Activated T-helper 1 cell treated with anti-CD3 and anti-CD28 coated beads, Interleukin-12 subunit alpha, Interleukin-12 subunit beta, Interleukin-2, Interleukin-4 antibody, amounts not matched to agents 30 ng/mL and 10 ng/mL and 1 ng/mL, durations not matched to agents 14 hours and 24 hours and 36 hours (primary cell): ENCODE measurements at regions of chr22 and their contacts with region 1.

Region 1: DNA sequence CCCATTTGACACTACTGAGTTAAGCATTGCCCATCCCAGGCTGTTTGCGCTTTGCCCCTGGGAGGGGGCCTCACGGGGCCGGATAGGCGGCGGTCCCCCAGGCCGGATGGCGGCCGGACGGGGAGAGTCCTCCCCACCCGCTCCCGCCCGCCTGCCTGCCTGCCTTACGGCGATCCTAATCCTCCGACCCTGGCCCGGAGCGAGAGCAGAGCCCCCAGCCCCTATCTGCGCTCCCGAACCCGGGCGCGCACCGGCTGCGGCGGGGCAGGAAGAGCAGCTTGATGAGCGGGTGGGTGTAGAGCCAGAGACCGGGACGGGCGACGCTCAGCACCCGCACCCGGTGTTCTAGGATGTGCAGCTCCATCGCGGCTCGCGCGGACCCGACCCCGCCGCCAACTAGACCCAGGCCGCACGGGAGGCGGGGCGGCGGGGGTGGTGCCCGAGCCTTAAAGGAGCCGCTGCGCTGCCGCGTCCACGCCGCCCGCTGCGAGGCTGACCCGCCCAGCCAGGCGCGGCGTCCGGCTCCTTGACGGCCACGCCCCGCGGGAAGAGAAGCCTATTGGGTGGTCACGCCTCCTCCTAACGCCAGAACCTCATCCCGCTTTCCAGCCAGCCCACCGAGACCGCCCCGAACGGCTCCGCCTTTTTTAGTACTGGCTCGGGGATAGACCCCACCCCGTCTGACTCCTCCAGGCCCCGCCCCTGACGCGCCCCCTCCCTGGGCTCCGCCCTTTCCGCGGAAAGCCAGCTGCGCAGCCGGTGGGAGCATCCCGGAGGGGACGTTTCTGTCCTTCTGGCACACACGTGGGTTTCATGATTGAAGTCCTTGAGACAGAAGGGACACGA is at the start of gene CASTOR1:
- DNase-seq: peak; percentile 90
- H3K4me3 Mint-ChIP-seq: peak within 1 kb of the TSS; percentile 87
- H3K27ac Mint-ChIP-seq: peak within 1 kb of the TSS; percentile 81
- H3K4me1 Mint-ChIP-seq: peaks cover 56% of the 10 kb centered on the region
- H3K27me3 Mint-ChIP-seq: no peaks in the 10 kb centered on the region
- total RNA-seq, gene CASTOR1: 5.6 and 8.8 TPM in 2 replicates

Region 2: GRCh38 chr22:30104501-30105156 is 184.7 kb before region 1 on chr22:
- intact Hi-C with region 1: loop called (anchors 1 kb)
- DNase-seq: peak; percentile 23
- H3K4me3 Mint-ChIP-seq: peak overlapping the region; percentile 37
- H3K27ac Mint-ChIP-seq: peak overlapping the region; percentile 82
- H3K4me1 Mint-ChIP-seq: peaks cover 57% of the 10 kb centered on the region
- H3K27me3 Mint-ChIP-seq: no peaks in the 10 kb centered on the region

Region 3: GRCh38 chr22:30245985-30246901 is 43.1 kb before region 1 on chr22 and contains the start of gene LIF:
- intact Hi-C with region 1: loop called (anchors 1 kb)
- DNase-seq: peak; percentile 53
- H3K4me3 Mint-ChIP-seq: peak within 1 kb of the TSS; percentile 100
- H3K27ac Mint-ChIP-seq: peak within 1 kb of the TSS; percentile 100
- H3K4me1 Mint-ChIP-seq: peaks cover 64% of the 10 kb centered on the region
- H3K27me3 Mint-ChIP-seq: no peaks in the 10 kb centered on the region
- total RNA-seq, gene LIF: 450 and 455 TPM in 2 replicates

Region 4: DNA sequence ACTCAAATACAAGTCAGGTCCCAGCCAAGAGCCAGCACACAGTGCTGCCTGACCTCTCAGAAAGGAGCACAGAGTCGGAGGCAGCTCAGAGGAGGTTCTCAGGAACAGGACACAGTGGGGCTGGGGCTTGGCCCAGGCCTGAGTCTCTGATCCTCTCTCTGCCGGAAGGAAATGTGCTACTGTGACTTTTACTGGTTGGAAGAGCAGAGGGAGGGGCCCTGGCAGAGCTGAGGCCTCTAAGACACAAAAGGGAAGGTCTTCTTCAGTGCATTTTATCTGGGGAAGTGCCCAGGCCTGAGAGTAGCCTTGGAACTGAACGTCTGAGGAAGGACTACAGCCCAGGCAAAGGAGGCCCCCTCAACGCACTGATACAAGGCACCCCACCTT is 16.2 kb after region 1 on chr22:
- intact Hi-C with region 1: loop called (anchors 1 kb)
- DNase-seq: peak; percentile 68
- H3K4me3 Mint-ChIP-seq: peak overlapping the region; percentile 77
- H3K27ac Mint-ChIP-seq: peak overlapping the region; percentile 95
- H3K4me1 Mint-ChIP-seq: peaks cover 93% of the 10 kb centered on the region
- H3K27me3 Mint-ChIP-seq: no peaks in the 10 kb centered on the region

Region 5: GRCh38 chr22:30326706-30327362 is 37.5 kb after region 1 on chr22 and contains the start of gene TBC1D10A:
- intact Hi-C with region 1: loop called (anchors 1 kb)
- DNase-seq: peak; percentile 90
- H3K4me3 Mint-ChIP-seq: peak within 1 kb of the TSS; percentile 89
- H3K27ac Mint-ChIP-seq: peak within 1 kb of the TSS; percentile 60
- H3K4me1 Mint-ChIP-seq: peaks cover 48% of the 10 kb centered on the region
- H3K27me3 Mint-ChIP-seq: no peaks in the 10 kb centered on the region
- total RNA-seq, gene TBC1D10A: 17.3 and 24.9 TPM in 2 replicates

Region 6: GRCh38 chr22:30356449-30357235 is 67.3 kb after region 1 on chr22 and contains the starts of genes CCDC157 and SF3A1:
- intact Hi-C with region 1: loop called (anchors 1 kb)
- DNase-seq: peak; percentile 88
- H3K4me3 Mint-ChIP-seq: peak within 1 kb of the TSS; percentile 94
- H3K27ac Mint-ChIP-seq: peak within 1 kb of the TSS; percentile 90
- H3K4me1 Mint-ChIP-seq: peaks cover 43% of the 10 kb centered on the region
- H3K27me3 Mint-ChIP-seq: peaks cover 8% of the 10 kb centered on the region
- total RNA-seq, gene CCDC157: 2.4 and 3.0 TPM in 2 replicates
- total RNA-seq, gene SF3A1: 308 and 310 TPM in 2 replicates

Region 7: GRCh38 chr22:30485362-30485988 is 196.1 kb after region 1 on chr22:
- intact Hi-C with region 1: loop called (anchors 1 kb)
- DNase-seq: peak; percentile 70
- H3K4me3 Mint-ChIP-seq: no peak overlapping the region
- H3K27ac Mint-ChIP-seq: no peak overlapping the region
- H3K4me1 Mint-ChIP-seq: no peaks in the 10 kb centered on the region
- H3K27me3 Mint-ChIP-seq: peaks cover 4% of the 10 kb centered on the region